ENCODE measurements at regions of chr12 and their contacts with region 1.

Region 1: GRCh38 chr12:6230321-6231110 is 30.3 kb downstream of the CD9 start:
- DNase-seq: peak; percentile 77 to 98 (median 89)

Region 2: GRCh38 chr12:6140651-6141447 is 89.7 kb before region 1 on chr12:
- intact Hi-C with region 1: no loop called
- DNase-seq: peak in 1 of 10 donors; percentile 75

Region 3: GRCh38 chr12:6241495-6241894 is 11.0 kb after region 1 on chr12:
- intact Hi-C with region 1: no loop called
- DNase-seq: peak in 2 of 10 donors; percentile 35 to 72

Region 4: DNA sequence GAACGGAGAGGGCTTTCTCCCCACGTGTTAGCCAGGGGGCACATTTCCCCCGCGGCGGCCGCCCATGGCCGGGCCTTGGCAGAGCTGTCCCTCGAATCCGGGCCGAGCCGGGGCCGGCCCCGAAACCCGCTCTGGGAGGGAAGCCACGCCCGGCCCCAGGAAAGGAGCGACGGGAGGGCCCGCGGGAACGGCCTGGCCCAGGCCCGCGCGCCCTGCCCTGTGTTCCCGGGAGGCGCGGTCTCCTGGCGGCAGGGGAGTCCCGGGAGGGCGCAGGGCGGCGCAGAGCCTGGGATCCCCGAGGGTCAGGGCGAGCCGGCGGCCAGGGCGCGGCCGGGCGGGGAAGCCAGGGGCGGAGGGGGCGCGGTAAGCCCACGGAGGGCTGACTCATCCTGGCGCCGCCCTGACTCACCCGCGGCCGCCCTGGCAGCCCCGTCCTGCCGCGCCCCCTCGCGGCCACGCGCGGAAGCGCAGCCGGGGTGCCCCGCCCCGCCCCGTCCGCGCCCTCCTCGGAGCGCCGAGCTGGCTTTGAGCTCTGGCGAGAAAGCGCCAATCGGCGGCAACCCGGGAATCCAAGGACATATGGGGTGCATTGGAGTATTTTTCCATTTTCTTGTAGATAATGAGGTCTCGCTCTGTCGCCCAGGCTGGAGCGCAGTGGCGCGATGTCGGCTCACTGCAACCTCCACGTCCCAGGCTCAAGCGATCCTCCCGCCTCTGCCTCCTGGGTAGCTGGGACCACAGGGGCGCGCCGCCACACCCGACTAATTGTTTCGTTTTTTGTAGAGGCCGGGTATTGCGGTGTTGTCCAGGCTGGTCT is 48.1 kb after region 1 on chr12:
- intact Hi-C with region 1: loop called (anchors 5 kb)
- DNase-seq: peak; percentile 50 to 97 (median 71)